CD4-positive, alpha-beta T cell (primary cell): ENCODE measurements at regions of chr19 and their contacts with region 1.

Region 1: GRCh38 chr19:33080761-33081681 is at the start of gene GPATCH1:
- DNase-seq: peak; percentile 70 to 90 (median 80)
- ATAC-seq: peak; percentile 94
- H3K4me3 ChIP-seq: peak within 1 kb of the TSS; percentile 86
- H3K4me3 Mint-ChIP-seq: peak within 1 kb of the TSS; percentile 97
- H3K27ac ChIP-seq: peak within 1 kb of the TSS; percentile 59 to 71
- H3K27ac Mint-ChIP-seq: peak within 1 kb of the TSS; percentile 89
- H3K4me1 ChIP-seq: peaks cover 22% of the 10 kb centered on the region
- H3K4me1 Mint-ChIP-seq: peaks cover 23% of the 10 kb centered on the region
- H3K27me3 ChIP-seq: no peaks in the 10 kb centered on the region
- H3K27me3 Mint-ChIP-seq: no peaks in the 10 kb centered on the region
- CTCF ChIP-seq: no peak
- total RNA-seq, gene GPATCH1: 4.6 to 5.5 TPM

Region 2: GRCh38 chr19:33029746-33030303 is 51.2 kb before region 1 on chr19:
- CTCF ChIA-PET with region 1: no interaction called
- POLR2A ChIA-PET with region 1: no interaction called
- intact Hi-C with region 1: no loop called
- DNase-seq: no peak
- ATAC-seq: no peak
- H3K4me3 ChIP-seq: no peak overlapping the region
- H3K4me3 Mint-ChIP-seq: no peak overlapping the region
- H3K27ac ChIP-seq: no peak overlapping the region
- H3K27ac Mint-ChIP-seq: no peak overlapping the region
- H3K4me1 ChIP-seq: no peaks in the 10 kb centered on the region
- H3K4me1 Mint-ChIP-seq: no peaks in the 10 kb centered on the region
- H3K27me3 ChIP-seq: no peaks in the 10 kb centered on the region
- H3K27me3 Mint-ChIP-seq: no peaks in the 10 kb centered on the region
- CTCF ChIP-seq: no peak

Region 3: GRCh38 chr19:33047406-33047805 is 33.6 kb before region 1 on chr19:
- CTCF ChIA-PET with region 1: no interaction called
- POLR2A ChIA-PET with region 1: no interaction called
- intact Hi-C with region 1: no loop called
- DNase-seq: no peak
- ATAC-seq: no peak
- H3K4me3 ChIP-seq: no peak overlapping the region
- H3K4me3 Mint-ChIP-seq: no peak overlapping the region
- H3K27ac ChIP-seq: no peak overlapping the region
- H3K27ac Mint-ChIP-seq: no peak overlapping the region
- H3K4me1 ChIP-seq: no peaks in the 10 kb centered on the region
- H3K4me1 Mint-ChIP-seq: no peaks in the 10 kb centered on the region
- H3K27me3 ChIP-seq: no peaks in the 10 kb centered on the region
- H3K27me3 Mint-ChIP-seq: no peaks in the 10 kb centered on the region
- CTCF ChIP-seq: no peak

Region 4: GRCh38 chr19:33064792-33065550 is 16.1 kb before region 1 on chr19 and contains the start of gene RHPN2:
- CTCF ChIA-PET with region 1: no interaction called
- POLR2A ChIA-PET with region 1: no interaction called
- intact Hi-C with region 1: no loop called
- DNase-seq: peak in 10 of 14 experiments; percentile 3 to 65 (median 28)
- ATAC-seq: peak; percentile 54
- H3K4me3 ChIP-seq: peak within 1 kb of the TSS; percentile 24
- H3K4me3 Mint-ChIP-seq: peak within 1 kb of the TSS; percentile 42
- H3K27ac ChIP-seq: no peak within 1 kb of the TSS
- H3K27ac Mint-ChIP-seq: no peak within 1 kb of the TSS
- H3K4me1 ChIP-seq: peaks cover 15% of the 10 kb centered on the region
- H3K4me1 Mint-ChIP-seq: no peaks in the 10 kb centered on the region
- H3K27me3 ChIP-seq: peaks cover 18 to 28% of the 10 kb centered on the region in 2 experiments
- H3K27me3 Mint-ChIP-seq: peaks cover 49% of the 10 kb centered on the region
- CTCF ChIP-seq: no peak
- total RNA-seq, gene RHPN2: 0.08 TPM in 1 of 2 experiments, not detected in the other

Region 5: DNA sequence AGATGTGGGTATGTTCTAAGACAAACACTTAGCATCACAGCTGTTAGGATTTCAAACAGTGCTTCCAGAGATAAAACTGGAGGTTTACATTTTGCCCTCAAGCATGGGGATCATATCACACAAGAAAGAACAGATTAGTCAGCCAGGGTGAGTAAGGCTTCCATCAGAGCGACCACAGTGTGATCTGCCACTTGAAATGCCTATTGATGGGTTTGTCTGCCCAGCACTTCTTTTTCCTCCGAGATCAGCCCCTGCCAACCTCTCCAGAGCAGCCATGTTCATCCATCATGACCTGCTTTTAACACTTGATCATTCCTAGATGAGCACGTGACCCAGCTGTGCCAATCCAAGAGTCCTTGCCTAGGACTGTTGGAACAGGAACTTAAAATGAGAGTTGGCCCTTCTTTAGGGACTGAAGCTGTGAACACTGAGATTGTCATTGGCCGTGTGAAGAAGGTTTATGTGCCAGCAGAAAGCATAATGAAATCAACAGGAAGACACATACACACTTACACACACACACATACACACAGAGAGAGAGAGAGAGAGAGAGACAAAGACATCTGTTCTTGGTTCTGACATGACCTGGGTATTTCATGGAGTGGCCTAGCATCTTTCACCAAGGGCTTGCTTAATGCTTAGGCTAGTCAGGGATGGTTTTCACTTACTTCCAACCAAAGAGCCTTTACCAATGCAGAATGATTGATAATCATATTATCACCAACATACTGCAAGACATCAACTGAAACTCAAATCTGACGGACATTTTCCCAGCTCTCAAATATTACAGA is 287.2 kb after region 1 on chr19:
- CTCF ChIA-PET with region 1: no interaction called
- POLR2A ChIA-PET with region 1: interaction called, 9 read pairs
- intact Hi-C with region 1: loop called in 1 of 2 experiments (anchors 5 kb)
- DNase-seq: no peak
- ATAC-seq: no peak
- H3K4me3 ChIP-seq: no peak overlapping the region
- H3K4me3 Mint-ChIP-seq: no peak overlapping the region
- H3K27ac ChIP-seq: no peak overlapping the region
- H3K27ac Mint-ChIP-seq: no peak overlapping the region
- H3K4me1 ChIP-seq: peaks cover 15% of the 10 kb centered on the region
- H3K4me1 Mint-ChIP-seq: peaks cover 5% of the 10 kb centered on the region
- H3K27me3 ChIP-seq: peaks cover 0 to 3% of the 10 kb centered on the region in 2 experiments
- H3K27me3 Mint-ChIP-seq: peaks cover 6% of the 10 kb centered on the region
- CTCF ChIP-seq: no peak